Mammary epithelial cell (primary cell): ENCODE measurements at regions of chr2 and their contacts with region 1.

Region 1: GRCh38 chr2:96554293-96555145 is 18.0 kb downstream of the ARID5A start:
- DNase-seq: peak; percentile 20
- H3K4me3 ChIP-seq: no peak overlapping the region
- H3K27ac ChIP-seq: no peak overlapping the region
- H3K4me1 ChIP-seq: peaks cover 14% of the 10 kb centered on the region
- H3K27me3 ChIP-seq: no peaks in the 10 kb centered on the region
- CTCF ChIP-seq: peak; percentile 87 to 97

Region 2: GRCh38 chr2:96276787-96277499 is 277.6 kb before region 1 on chr2:
- CTCF ChIA-PET with region 1: no interaction called
- dilution Hi-C with region 1: no loop called
- in situ Hi-C with region 1: no loop called
- intact Hi-C with region 1: no loop called
- DNase-seq: no peak
- H3K4me3 ChIP-seq: no peak overlapping the region
- H3K27ac ChIP-seq: no peak overlapping the region
- H3K4me1 ChIP-seq: no peaks in the 10 kb centered on the region
- H3K27me3 ChIP-seq: no peaks in the 10 kb centered on the region
- CTCF ChIP-seq: no peak

Region 3: DNA sequence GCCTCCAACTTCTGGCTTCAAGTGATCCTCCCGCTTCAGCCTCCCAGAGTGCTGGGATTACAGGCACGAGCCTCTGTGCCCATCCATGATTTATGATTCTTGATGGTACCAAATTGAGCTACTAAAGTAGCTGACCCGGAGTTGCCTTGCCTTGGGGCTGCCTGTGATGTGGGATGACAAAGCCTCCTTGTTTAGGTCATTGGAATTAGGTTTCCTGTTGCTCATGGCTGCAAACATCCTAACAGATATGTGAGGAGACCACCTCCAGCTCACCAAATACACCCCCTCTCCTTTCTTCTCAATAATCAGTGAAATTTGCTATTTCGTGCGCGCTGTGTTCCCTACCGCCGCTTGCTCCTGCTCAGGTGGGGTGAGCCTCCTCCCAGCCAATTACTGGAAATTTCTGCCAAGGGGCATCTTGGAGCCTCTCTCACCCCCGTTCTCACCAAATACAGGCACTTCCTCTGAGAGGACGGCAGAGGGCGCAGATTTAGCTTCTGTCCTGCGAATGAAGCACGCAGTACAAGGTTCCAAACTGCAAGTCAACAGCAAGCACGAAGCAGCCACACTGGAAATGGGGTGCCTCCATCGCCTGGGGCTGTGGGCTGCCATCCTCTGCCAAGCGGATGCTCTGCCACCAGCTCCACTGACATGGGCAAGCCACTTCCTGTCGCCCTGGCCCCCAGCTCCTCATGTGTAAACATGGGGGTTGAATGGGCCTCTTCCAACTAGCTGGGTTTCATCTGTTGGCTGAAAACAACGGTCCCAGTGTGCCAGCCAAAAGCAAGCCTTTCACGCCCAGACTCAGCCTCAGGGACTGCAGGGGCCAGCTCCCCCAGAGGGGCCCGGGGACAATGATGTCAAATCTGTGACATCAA is 147.2 kb before region 1 on chr2:
- CTCF ChIA-PET with region 1: no interaction called
- dilution Hi-C with region 1: no loop called
- in situ Hi-C with region 1: no loop called
- intact Hi-C with region 1: loop called (anchors 1 kb)
- DNase-seq: peak; percentile 56
- H3K4me3 ChIP-seq: no peak overlapping the region
- H3K27ac ChIP-seq: no peak overlapping the region
- H3K4me1 ChIP-seq: peaks cover 9% of the 10 kb centered on the region
- H3K27me3 ChIP-seq: no peaks in the 10 kb centered on the region
- CTCF ChIP-seq: peak; percentile 84 to 89

Region 4: DNA sequence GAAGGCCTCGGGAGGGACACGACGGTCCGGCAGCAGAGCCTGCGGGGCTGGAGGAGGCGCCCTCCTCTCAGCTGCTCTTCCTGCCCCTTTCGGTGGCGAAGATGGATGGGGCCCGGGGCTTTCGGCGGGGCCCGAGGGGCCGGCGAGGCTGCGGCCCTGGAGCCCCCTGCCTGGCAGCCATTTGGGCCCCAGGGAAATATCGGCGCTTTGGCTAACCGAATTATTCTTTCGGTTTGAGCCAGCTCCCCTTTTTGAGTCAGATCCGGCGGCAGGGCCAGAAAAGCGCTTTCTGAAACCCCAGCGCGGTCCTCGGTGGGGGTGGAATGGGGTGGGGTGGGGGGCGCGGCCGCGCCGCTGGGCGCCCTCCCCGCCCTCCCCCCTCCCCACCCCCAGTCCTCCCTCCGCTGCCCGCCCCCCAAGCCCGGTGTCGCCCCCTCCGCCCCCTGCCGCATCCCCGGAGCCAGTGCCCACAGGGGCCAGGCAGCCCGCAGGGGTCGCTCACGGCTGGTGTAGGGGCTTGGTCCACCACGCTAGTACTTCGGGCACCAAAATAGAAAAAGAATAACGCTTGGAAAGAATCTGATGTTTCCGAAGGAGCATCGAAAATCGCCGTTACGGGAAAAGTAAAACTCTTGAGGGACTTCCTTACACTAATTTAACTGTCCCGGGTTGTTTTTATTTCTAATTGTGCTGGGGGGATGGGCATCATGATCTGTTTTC is 27.1 kb before region 1 on chr2:
- CTCF ChIA-PET with region 1: no interaction called
- dilution Hi-C with region 1: no loop called
- in situ Hi-C with region 1: no loop called
- intact Hi-C with region 1: loop called (anchors 1 kb)
- DNase-seq: no peak
- H3K4me3 ChIP-seq: peak overlapping the region; percentile 47 to 50 (median 47)
- H3K27ac ChIP-seq: no peak overlapping the region
- H3K4me1 ChIP-seq: peaks cover 18% of the 10 kb centered on the region
- H3K27me3 ChIP-seq: peaks cover 4% of the 10 kb centered on the region
- CTCF ChIP-seq: peak in 1 of 2 donors; percentile 22

Region 5: GRCh38 chr2:96536445-96537065 is 18.0 kb before region 1 on chr2 and contains the start of gene ARID5A:
- CTCF ChIA-PET with region 1: interaction called, 7 read pairs
- dilution Hi-C with region 1: no loop called
- in situ Hi-C with region 1: no loop called
- intact Hi-C with region 1: loop called (anchors 1 kb)
- DNase-seq: peak; percentile 84
- H3K4me3 ChIP-seq: peak within 1 kb of the TSS; percentile 56 to 74 (median 66)
- H3K27ac ChIP-seq: peak within 1 kb of the TSS; percentile 48
- H3K4me1 ChIP-seq: peaks cover 74% of the 10 kb centered on the region
- H3K27me3 ChIP-seq: no peaks in the 10 kb centered on the region
- CTCF ChIP-seq: no peak
- total RNA-seq, gene ARID5A: 6.6 to 8.3 TPM

Region 6: DNA sequence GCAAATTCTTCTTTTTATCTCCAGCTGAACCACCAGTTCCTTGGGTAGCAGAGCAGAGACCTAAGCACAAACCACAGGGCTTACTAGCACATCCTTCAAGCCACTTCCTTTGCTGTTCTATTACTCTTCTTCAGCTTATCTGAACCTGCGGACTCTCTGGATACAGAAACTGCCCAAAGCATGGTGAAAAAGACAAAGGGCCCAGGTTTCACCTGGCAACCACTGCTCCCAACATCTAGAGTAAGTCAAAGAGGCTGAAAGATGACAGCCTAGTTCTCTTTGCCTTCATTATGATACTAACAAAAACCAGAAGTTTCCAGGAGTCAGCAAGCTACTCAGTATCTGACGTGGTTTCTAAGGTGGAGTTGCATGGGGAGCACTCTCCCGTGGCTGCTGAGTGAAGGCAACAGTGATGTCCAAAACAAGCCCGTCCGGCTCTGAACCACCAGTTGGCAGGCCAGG is 40.2 kb after region 1 on chr2:
- CTCF ChIA-PET with region 1: no interaction called
- dilution Hi-C with region 1: no loop called
- in situ Hi-C with region 1: no loop called
- intact Hi-C with region 1: no loop called
- DNase-seq: no peak
- H3K4me3 ChIP-seq: no peak overlapping the region
- H3K27ac ChIP-seq: no peak overlapping the region
- H3K4me1 ChIP-seq: peaks cover 5% of the 10 kb centered on the region
- H3K27me3 ChIP-seq: no peaks in the 10 kb centered on the region
- CTCF ChIP-seq: no peak

Region 7: GRCh38 chr2:96637385-96638143 is 83.0 kb after region 1 on chr2:
- CTCF ChIA-PET with region 1: no interaction called
- dilution Hi-C with region 1: no loop called
- in situ Hi-C with region 1: no loop called
- intact Hi-C with region 1: no loop called
- DNase-seq: peak; percentile 83
- H3K4me3 ChIP-seq: peak overlapping the region; percentile 73 to 87 (median 78)
- H3K27ac ChIP-seq: peak overlapping the region; percentile 69
- H3K4me1 ChIP-seq: peaks cover 8% of the 10 kb centered on the region
- H3K27me3 ChIP-seq: no peaks in the 10 kb centered on the region
- CTCF ChIP-seq: no peak

Region 8: GRCh38 chr2:96760036-96760985 is 205.8 kb after region 1 on chr2 and contains the start of gene CNNM4:
- CTCF ChIA-PET with region 1: no interaction called
- dilution Hi-C with region 1: no loop called
- in situ Hi-C with region 1: no loop called
- intact Hi-C with region 1: loop called (anchors 2 kb)
- DNase-seq: peak; percentile 90
- H3K4me3 ChIP-seq: peak within 1 kb of the TSS; percentile 46 to 86 (median 78)
- H3K27ac ChIP-seq: no peak within 1 kb of the TSS
- H3K4me1 ChIP-seq: peaks cover 51% of the 10 kb centered on the region
- H3K27me3 ChIP-seq: no peaks in the 10 kb centered on the region
- CTCF ChIP-seq: peak in 1 of 2 donors; percentile 24
- total RNA-seq, gene CNNM4: 8.1 to 8.2 TPM

Region 9: DNA sequence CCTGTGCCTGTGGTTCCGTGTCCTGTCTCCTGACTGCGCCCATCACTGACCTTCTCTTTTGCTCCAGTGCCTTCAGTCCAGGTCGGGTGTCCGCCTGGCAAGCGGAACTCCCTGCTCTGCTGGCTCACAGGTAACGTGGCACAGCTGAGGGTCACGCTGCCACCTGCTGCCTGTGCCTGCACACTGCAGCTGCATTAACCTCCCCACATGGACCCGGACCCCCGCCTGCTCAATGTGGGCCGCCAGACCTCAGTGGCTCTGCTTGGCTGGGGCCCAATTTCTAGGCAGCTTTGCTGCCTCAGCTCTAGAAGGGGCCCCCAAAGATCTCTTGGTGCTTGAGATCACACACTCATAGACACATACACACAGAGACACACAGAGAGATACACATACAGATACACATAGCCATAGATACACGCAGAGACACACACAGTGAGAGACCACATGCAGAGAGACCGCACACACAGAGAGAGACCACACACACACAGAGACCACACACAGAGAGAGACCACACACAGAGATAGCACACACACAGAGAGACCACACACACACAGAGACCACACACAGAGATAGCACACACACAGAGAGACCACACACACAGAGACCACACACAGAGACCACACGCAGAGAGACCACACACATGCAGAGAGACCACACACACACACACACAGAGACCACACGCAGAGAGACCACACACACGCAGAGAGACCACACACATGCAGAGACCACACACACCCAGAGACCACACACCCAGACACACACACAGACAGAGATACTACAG is 246.7 kb after region 1 on chr2:
- CTCF ChIA-PET with region 1: no interaction called
- dilution Hi-C with region 1: no loop called
- in situ Hi-C with region 1: no loop called
- intact Hi-C with region 1: loop called (anchors 5 kb)
- DNase-seq: peak; percentile 43
- H3K4me3 ChIP-seq: no peak overlapping the region
- H3K27ac ChIP-seq: no peak overlapping the region
- H3K4me1 ChIP-seq: no peaks in the 10 kb centered on the region
- H3K27me3 ChIP-seq: no peaks in the 10 kb centered on the region
- CTCF ChIP-seq: peak; percentile 83 to 92

Region 10: GRCh38 chr2:96960153-96960961 is 405.8 kb after region 1 on chr2:
- CTCF ChIA-PET with region 1: no interaction called
- dilution Hi-C with region 1: no loop called
- in situ Hi-C with region 1: no loop called
- intact Hi-C with region 1: loop called (anchors 5 kb)
- DNase-seq: peak; percentile 54
- H3K4me3 ChIP-seq: no peak overlapping the region
- H3K27ac ChIP-seq: no peak overlapping the region
- H3K4me1 ChIP-seq: peaks cover 10% of the 10 kb centered on the region
- H3K27me3 ChIP-seq: no peaks in the 10 kb centered on the region
- CTCF ChIP-seq: peak; percentile 91 to 95